A549 (cell line): ENCODE measurements at regions of chr7 and their contacts with region 1.

Region 1: GRCh38 chr7:26686448-26686981 is 177.9 kb downstream of the SKAP2 start:
- DNase-seq: peak in 1 of 2 experiments; percentile 54
- ATAC-seq: peak; percentile 50 to 78; a peak in 4 of 6 replicates
- H3K4me3 ChIP-seq: no peak overlapping the region
- H3K27ac ChIP-seq: peak overlapping the region in 1 of 2 experiments; percentile 54; a peak in 3 of 6 replicates
- H3K4me1 ChIP-seq: peaks cover 43% of the 10 kb centered on the region
- CTCF ChIP-seq: peak; percentile 88
- EP300 ChIP-seq: no peak
- POLR2A ChIP-seq: no peak
- RAD21 ChIP-seq: peak; percentile 67 to 85

Region 2: GRCh38 chr7:26667500-26668133 is 18.9 kb before region 1 on chr7:
- CTCF ChIA-PET with region 1: interaction called, 33 read pairs
- POLR2A ChIA-PET with region 1: no interaction called
- DNase-seq: peak; percentile 47 to 94
- ATAC-seq: peak; percentile 99 to 100
- H3K4me3 ChIP-seq: no peak overlapping the region
- H3K27ac ChIP-seq: no peak overlapping the region
- H3K4me1 ChIP-seq: 0 out of 3 replicates have a peak, but pooled peaks cover 4% of the 10 kb centered on the region
- CTCF ChIP-seq: peak; percentile 98
- EP300 ChIP-seq: no peak
- POLR2A ChIP-seq: no peak
- RAD21 ChIP-seq: peak; percentile 90 to 97

Region 3: GRCh38 chr7:26675143-26675887 is 11.2 kb before region 1 on chr7:
- CTCF ChIA-PET with region 1: interaction called, 12 read pairs
- POLR2A ChIA-PET with region 1: no interaction called
- DNase-seq: no peak
- ATAC-seq: peak; percentile 49 to 68; a peak in 3 of 6 replicates
- H3K4me3 ChIP-seq: no peak overlapping the region
- H3K27ac ChIP-seq: no peak overlapping the region
- H3K4me1 ChIP-seq: 0 out of 3 replicates have a peak, but pooled peaks cover 4% of the 10 kb centered on the region
- CTCF ChIP-seq: no peak
- EP300 ChIP-seq: no peak
- POLR2A ChIP-seq: no peak
- RAD21 ChIP-seq: no peak

Region 4: GRCh38 chr7:26705567-26705966 is 19.1 kb after region 1 on chr7:
- CTCF ChIA-PET with region 1: interaction called, 17 read pairs
- POLR2A ChIA-PET with region 1: no interaction called
- DNase-seq: peak; percentile 54 to 69
- ATAC-seq: peak; percentile 80 to 88
- H3K4me3 ChIP-seq: no peak overlapping the region
- H3K27ac ChIP-seq: no peak overlapping the region
- H3K4me1 ChIP-seq: peaks cover 29% of the 10 kb centered on the region
- CTCF ChIP-seq: no peak
- EP300 ChIP-seq: no peak
- POLR2A ChIP-seq: no peak
- RAD21 ChIP-seq: no peak

Region 5: DNA sequence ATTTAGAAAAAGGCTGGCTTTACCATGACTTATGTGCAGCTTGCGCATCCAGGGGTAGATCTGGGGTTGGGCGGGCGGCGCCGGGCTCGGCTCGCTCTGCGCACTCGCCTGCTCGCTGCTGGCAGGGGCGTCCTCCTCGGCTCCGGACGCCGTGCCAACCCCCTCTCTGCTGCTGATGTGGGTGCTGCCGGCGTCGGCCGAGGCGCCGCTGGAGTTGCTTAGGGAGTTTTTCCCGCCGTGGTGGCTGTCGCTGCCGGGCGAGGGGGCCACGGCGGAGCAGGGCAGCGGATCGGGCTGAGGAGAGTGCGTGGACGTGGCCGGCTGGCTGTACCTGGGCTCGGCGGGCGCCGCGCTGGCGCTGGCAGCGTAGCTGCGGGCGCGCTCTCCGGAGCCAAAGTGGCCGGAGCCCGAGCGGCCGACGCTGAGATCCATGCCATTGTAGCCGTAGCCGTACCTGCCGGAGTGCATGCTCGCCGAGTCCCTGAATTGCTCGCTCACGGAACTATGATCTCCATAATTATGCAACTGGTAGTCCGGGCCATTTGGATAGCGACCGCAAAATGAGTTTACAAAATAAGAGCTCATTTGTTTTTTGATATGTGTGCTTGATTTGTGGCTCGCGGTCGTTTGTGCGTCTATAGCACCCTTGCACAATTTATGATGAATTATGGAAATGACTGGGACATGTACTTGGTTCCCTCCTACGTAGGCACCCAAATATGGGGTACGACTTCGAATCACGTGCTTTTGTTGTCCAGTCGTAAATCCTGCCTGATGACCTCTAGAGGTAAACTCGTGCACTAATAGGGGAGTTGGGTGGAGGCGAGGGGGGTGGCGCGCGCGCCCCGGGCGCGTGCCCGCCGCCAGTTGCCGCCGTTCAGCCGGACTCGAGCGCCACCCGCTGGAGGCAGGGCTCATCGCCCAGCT is 456.8 kb after region 1 on chr7 and contains the start of gene HOXA5:
- CTCF ChIA-PET with region 1: interaction called, 65 read pairs
- POLR2A ChIA-PET with region 1: no interaction called
- DNase-seq: peak; percentile 95 to 96
- ATAC-seq: peak; percentile 78 to 85
- H3K4me3 ChIP-seq: peak within 1 kb of the TSS; percentile 72
- H3K27ac ChIP-seq: peak within 1 kb of the TSS; percentile 79 to 93
- H3K4me1 ChIP-seq: peaks cover 5% of the 10 kb centered on the region; the same call in 2 of the 3 replicates
- CTCF ChIP-seq: peak; percentile 88
- EP300 ChIP-seq: no peak
- POLR2A ChIP-seq: no peak
- RAD21 ChIP-seq: peak; percentile 73 to 91
- polyA plus RNA-seq, gene HOXA5: 6.3 and 6.5 TPM in 2 replicates

Region 6: GRCh38 chr7:27150568-27151340 is 464.2 kb after region 1 on chr7:
- CTCF ChIA-PET with region 1: interaction called, 65 read pairs
- POLR2A ChIA-PET with region 1: interaction called, 3 read pairs
- DNase-seq: peak; percentile 81 to 91
- ATAC-seq: peak; percentile 92 to 93
- H3K4me3 ChIP-seq: peak overlapping the region; percentile 49
- H3K27ac ChIP-seq: peak overlapping the region; percentile 88 to 90
- H3K4me1 ChIP-seq: peaks cover 16% of the 10 kb centered on the region
- CTCF ChIP-seq: peak; percentile 78
- EP300 ChIP-seq: no peak
- POLR2A ChIP-seq: peak; percentile 56
- RAD21 ChIP-seq: peak; percentile 31 to 55; a peak in 4 of 5 replicates

Region 7: GRCh38 chr7:27160546-27161213 is 474.2 kb after region 1 on chr7:
- CTCF ChIA-PET with region 1: interaction called, 14 read pairs
- POLR2A ChIA-PET with region 1: interaction called, 3 read pairs
- DNase-seq: peak; percentile 82 to 87
- ATAC-seq: peak; percentile 70 to 84
- H3K4me3 ChIP-seq: peak overlapping the region; percentile 65
- H3K27ac ChIP-seq: peak overlapping the region; percentile 86
- H3K4me1 ChIP-seq: 0 out of 3 replicates have a peak, but pooled peaks cover 3% of the 10 kb centered on the region
- CTCF ChIP-seq: peak; percentile 93
- EP300 ChIP-seq: no peak
- POLR2A ChIP-seq: no peak
- RAD21 ChIP-seq: peak; percentile 91 to 95